ENCODE measurements at regions of chr3 and their contacts with region 1.

Region 1: DNA sequence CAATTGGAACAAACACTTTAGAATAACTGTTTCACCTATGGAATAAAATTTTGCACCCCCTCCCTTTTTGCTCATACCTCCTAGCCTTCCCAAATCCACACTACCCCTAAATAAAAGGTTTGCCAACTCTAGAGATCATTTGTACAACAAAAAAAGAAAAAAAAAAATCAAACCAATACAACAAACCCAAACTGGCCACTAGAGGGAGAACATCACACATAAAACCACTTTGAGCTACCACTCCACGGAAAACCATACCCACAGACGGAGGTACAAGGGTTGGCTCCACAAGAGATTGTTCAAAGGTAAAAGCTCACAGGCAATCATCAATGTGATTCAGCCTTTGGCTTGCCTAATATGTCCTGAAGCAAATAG is 47.6 kb downstream of the SETMAR start:
- DNase-seq: peak; percentile 59
- H3K4me3 Mint-ChIP-seq: peak overlapping the region; percentile 42
- H3K27ac Mint-ChIP-seq: peak overlapping the region; percentile 54
- H3K4me1 Mint-ChIP-seq: peaks cover 17% of the 10 kb centered on the region
- H3K27me3 Mint-ChIP-seq: no peaks in the 10 kb centered on the region

Region 2: GRCh38 chr3:4021162-4021561 is 329.6 kb before region 1 on chr3:
- CTCF ChIA-PET with region 1: no interaction called
- intact Hi-C with region 1: no loop called
- DNase-seq: no peak
- H3K4me3 Mint-ChIP-seq: no peak overlapping the region
- H3K27ac Mint-ChIP-seq: no peak overlapping the region
- H3K4me1 Mint-ChIP-seq: no peaks in the 10 kb centered on the region
- H3K27me3 Mint-ChIP-seq: no peaks in the 10 kb centered on the region

Region 3: DNA sequence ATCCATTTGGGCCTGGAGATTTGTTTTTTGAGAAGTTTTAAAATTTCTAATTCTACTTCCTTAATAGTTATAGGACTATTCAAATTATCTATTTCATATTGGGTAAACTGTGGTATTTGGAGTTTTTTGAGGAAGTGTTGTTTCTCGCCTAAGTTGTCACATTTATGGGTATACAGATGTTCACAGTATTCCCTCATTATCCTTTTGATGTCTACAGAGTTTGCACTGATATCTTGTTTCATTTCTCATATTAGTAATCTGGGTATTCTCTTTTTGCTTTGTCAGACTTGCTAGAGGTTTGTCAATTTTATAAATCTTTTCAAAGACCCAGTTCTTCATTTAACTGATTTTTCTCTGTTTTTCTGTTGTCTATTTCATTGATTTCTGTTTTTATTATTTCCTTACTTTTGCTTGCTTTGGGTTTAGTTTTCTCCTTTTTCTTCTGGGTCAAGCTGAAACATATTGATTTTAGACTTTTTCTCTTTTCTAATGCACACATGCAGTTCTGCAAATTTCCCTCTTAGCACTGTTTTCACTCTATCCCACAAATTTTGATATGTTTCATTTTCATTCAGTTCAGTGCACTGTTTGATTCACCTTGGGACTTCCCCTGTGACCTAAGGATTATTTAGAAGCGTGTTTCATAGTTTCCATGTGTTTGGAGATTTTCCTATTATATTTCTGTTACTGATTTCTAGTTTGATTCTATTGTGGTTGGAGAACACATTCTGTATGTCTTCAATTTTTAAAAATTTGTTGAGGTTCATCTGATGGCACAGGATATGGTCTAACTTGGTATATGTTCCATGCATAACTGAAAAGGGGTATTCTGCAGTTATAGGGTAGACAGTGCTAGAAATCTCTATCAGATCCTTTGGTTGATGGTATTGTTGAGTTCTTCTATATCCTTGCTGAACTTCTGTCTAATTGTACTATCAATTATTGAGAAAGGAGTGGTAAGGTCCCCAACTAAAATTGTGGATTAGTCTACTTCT is 36.7 kb after region 1 on chr3:
- CTCF ChIA-PET with region 1: no interaction called
- intact Hi-C with region 1: loop called (anchors 1 kb)
- DNase-seq: no peak
- H3K4me3 Mint-ChIP-seq: no peak overlapping the region
- H3K27ac Mint-ChIP-seq: peak overlapping the region; percentile 39
- H3K4me1 Mint-ChIP-seq: peaks cover 26% of the 10 kb centered on the region
- H3K27me3 Mint-ChIP-seq: no peaks in the 10 kb centered on the region

Region 4: DNA sequence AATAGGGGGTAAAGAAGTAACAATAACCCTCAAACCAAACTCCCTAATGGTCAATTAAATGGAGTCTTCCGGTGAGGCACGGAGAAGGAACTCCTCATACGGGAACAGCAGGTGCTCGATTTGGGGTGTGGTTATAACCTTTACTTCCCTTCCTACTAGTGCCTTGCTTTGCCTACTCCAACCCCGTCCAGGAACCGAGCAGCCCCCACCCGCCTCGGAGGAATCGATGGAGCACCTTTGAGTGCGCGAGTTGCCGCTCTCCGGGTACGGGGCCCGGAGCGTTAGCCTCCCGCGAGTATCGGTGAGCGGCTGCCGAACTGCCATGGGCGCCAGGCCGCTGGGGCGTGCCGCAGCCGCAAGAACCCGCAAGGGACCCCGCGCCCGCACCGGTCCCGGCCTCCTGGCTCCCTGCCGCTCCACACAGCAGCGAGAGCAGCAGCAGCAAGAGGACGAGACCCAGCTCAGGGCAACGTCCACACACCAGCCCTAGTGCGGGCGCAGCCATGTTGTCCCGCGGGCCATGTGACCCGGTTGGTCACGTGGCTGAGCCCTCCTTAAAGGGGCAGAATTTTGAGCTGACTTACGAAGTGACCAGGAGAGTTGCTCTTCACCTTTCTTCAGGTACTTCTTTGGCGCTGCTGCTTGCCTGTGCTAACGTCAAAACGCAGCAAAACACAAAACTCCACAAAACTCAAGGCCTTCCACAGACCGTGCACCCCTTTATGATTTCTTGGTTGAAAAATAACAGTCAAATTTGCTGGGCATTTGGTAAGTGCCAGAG is 116.2 kb after region 1 on chr3 and contains the start of gene SUMF1:
- CTCF ChIA-PET with region 1: interaction called, 9 read pairs
- intact Hi-C with region 1: loop called (anchors 1 kb)
- DNase-seq: peak; percentile 80
- H3K4me3 Mint-ChIP-seq: peak within 1 kb of the TSS; percentile 82
- H3K27ac Mint-ChIP-seq: peak within 1 kb of the TSS; percentile 78
- H3K4me1 Mint-ChIP-seq: peaks cover 18% of the 10 kb centered on the region
- H3K27me3 Mint-ChIP-seq: no peaks in the 10 kb centered on the region
- total RNA-seq, gene SUMF1: 3.9 to 5.0 TPM

Region 5: GRCh38 chr3:4571690-4572334 is 221.0 kb after region 1 on chr3:
- CTCF ChIA-PET with region 1: interaction called, 12 read pairs
- intact Hi-C with region 1: loop called (anchors 1 kb)
- DNase-seq: no peak
- H3K4me3 Mint-ChIP-seq: no peak overlapping the region
- H3K27ac Mint-ChIP-seq: no peak overlapping the region
- H3K4me1 Mint-ChIP-seq: peaks cover 8% of the 10 kb centered on the region
- H3K27me3 Mint-ChIP-seq: no peaks in the 10 kb centered on the region

Region 6: GRCh38 chr3:4712143-4712542 is 361.4 kb after region 1 on chr3:
- CTCF ChIA-PET with region 1: interaction called, 8 read pairs
- intact Hi-C with region 1: loop called (anchors 2 kb)
- DNase-seq: no peak
- H3K4me3 Mint-ChIP-seq: no peak overlapping the region
- H3K27ac Mint-ChIP-seq: no peak overlapping the region
- H3K4me1 Mint-ChIP-seq: peaks cover 2% of the 10 kb centered on the region
- H3K27me3 Mint-ChIP-seq: no peaks in the 10 kb centered on the region